Caco-2 (cell line): ENCODE measurements at regions of chr9 and their contacts with region 1.

Region 1: DNA sequence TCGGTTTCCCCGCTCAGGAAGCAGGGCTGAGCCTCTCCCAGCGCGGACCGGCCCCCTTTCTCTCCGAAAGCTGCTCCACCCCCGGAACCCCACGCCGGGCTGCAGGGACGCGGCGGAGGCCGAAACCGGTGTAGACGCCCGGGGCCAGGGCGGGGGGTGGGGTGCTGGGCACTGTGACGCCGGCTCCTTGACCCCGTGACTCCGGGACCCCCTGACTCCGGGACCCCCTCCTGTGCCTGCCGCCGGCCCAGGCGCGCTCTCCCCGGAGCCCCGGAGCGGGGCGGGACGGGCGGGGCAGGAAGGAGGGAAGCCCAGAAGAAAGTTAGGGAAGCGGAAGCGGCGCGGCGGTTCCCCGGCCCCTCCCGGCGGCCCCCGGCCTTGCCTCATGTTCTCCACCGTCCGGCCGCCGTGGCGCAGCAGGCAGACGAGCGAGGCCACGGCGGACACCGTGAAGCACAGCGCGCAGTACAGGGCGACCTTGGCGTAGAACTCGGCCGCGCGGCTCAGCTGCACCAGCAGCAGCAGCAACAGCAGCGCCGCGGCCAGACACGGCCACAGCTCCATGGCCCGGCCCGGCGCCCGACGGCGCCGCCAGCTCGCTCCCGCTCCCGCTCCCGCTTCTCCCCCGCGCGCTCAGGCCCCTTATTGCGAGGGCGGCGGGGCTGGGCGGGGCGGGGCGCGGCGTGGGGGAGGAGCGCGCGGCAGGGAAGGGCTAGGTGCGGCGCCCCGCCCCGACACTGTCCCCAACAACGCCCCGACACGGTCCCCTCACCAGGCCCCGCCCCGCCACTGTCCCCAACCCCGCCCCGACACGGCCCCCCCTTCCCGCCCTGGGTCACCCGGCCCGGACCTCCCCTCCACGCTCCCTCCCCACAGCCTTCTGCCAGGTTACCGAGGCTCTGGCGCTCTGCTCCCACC is at the start of gene AGPAT2:
- DNase-seq: peak; percentile 83
- H3K4me3 ChIP-seq: peak within 1 kb of the TSS; percentile 71
- H3K4me3 Mint-ChIP-seq: peak within 1 kb of the TSS; percentile 79
- H3K27ac Mint-ChIP-seq: peak within 1 kb of the TSS; percentile 66
- H3K4me1 ChIP-seq: peaks cover 34% of the 10 kb centered on the region
- H3K4me1 Mint-ChIP-seq: no peaks in the 10 kb centered on the region
- H3K27me3 ChIP-seq: no peaks in the 10 kb centered on the region
- H3K27me3 Mint-ChIP-seq: no peaks in the 10 kb centered on the region
- CTCF ChIP-seq: no peak
- total RNA-seq, gene AGPAT2: 68.7 and 77.1 TPM in 2 replicates

Region 2: GRCh38 chr9:135766251-135766650 is 920.8 kb before region 1 on chr9:
- CTCF ChIA-PET with region 1: no interaction called
- POLR2A ChIA-PET with region 1: no interaction called
- intact Hi-C with region 1: no loop called
- DNase-seq: no peak
- H3K4me3 ChIP-seq: no peak overlapping the region
- H3K4me3 Mint-ChIP-seq: no peak overlapping the region
- H3K27ac Mint-ChIP-seq: no peak overlapping the region
- H3K4me1 ChIP-seq: no peaks in the 10 kb centered on the region
- H3K4me1 Mint-ChIP-seq: no peaks in the 10 kb centered on the region
- H3K27me3 ChIP-seq: no peaks in the 10 kb centered on the region
- H3K27me3 Mint-ChIP-seq: no peaks in the 10 kb centered on the region
- CTCF ChIP-seq: no peak

Region 3: GRCh38 chr9:136426787-136427186 is 260.3 kb before region 1 on chr9:
- CTCF ChIA-PET with region 1: no interaction called
- POLR2A ChIA-PET with region 1: interaction called, 19 read pairs
- intact Hi-C with region 1: no loop called
- DNase-seq: no peak
- H3K4me3 ChIP-seq: no peak overlapping the region
- H3K4me3 Mint-ChIP-seq: no peak overlapping the region
- H3K27ac Mint-ChIP-seq: no peak overlapping the region
- H3K4me1 ChIP-seq: no peaks in the 10 kb centered on the region
- H3K4me1 Mint-ChIP-seq: no peaks in the 10 kb centered on the region
- H3K27me3 ChIP-seq: no peaks in the 10 kb centered on the region
- H3K27me3 Mint-ChIP-seq: no peaks in the 10 kb centered on the region
- CTCF ChIP-seq: no peak